B cell (primary cell): ENCODE measurements at regions of chr9 and their contacts with region 1.

Region 1: GRCh38 chr9:33498387-33498786 is 24.7 kb upstream of the NOL6 start:
- DNase-seq: no peak
- ATAC-seq: no peak
- H3K4me3 ChIP-seq: no peak overlapping the region
- H3K4me3 Mint-ChIP-seq: no peak overlapping the region
- H3K27ac ChIP-seq: no peak overlapping the region
- H3K27ac Mint-ChIP-seq: no peak overlapping the region
- H3K4me1 ChIP-seq: no peaks in the 10 kb centered on the region
- H3K4me1 Mint-ChIP-seq: no peaks in the 10 kb centered on the region
- H3K27me3 ChIP-seq: no peaks in the 10 kb centered on the region
- H3K27me3 Mint-ChIP-seq: peaks cover 10% of the 10 kb centered on the region
- CTCF ChIP-seq: peak; percentile 40

Region 2: DNA sequence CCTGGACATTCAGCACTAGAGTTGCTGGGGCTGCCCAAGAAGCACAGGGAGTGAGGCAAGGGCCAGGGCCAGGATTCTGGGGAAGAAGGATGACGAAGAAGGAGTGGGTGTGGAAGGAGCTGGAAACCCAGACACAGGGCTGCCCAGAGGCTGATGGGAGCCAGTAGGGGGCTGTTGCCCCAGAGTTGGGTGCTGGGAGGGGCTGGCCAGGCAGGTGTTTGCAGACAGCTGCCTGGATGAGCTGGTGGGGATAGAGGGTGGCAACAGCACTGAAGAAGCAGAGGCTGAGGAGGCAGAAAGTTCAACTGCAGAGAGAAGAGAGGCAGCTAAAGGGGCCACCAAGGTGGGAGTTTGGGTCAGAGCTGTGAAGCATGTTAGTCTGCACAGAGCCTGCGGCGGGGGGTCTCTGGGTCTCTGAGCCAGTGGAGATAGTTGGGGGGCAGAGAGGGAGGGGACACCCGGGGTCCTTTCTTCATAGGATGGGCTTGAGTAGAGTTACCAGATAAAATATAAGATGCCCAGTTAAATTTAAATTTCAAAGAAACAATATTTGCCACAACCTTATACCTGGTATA is 93.5 kb before region 1 on chr9:
- CTCF ChIA-PET with region 1: no interaction called
- POLR2A ChIA-PET with region 1: no interaction called
- intact Hi-C with region 1: loop called (anchors 10 kb)
- DNase-seq: no peak
- ATAC-seq: no peak
- H3K4me3 ChIP-seq: no peak overlapping the region
- H3K4me3 Mint-ChIP-seq: no peak overlapping the region
- H3K27ac ChIP-seq: no peak overlapping the region
- H3K27ac Mint-ChIP-seq: no peak overlapping the region
- H3K4me1 ChIP-seq: no peaks in the 10 kb centered on the region
- H3K4me1 Mint-ChIP-seq: no peaks in the 10 kb centered on the region
- H3K27me3 ChIP-seq: no peaks in the 10 kb centered on the region
- H3K27me3 Mint-ChIP-seq: peaks cover 6% of the 10 kb centered on the region
- CTCF ChIP-seq: no peak